ENCODE measurements at regions of chr1 and their contacts with region 1.

Region 1: GRCh38 chr1:166032572-166033371 is 134.0 kb downstream of the FAM78B start:
- DNase-seq: no peak
- ATAC-seq: no peak
- H3K4me3 ChIP-seq: no peak overlapping the region
- H3K27ac ChIP-seq: no peak overlapping the region
- H3K4me1 ChIP-seq: no peaks in the 10 kb centered on the region
- H3K27me3 ChIP-seq: no peaks in the 10 kb centered on the region
- CTCF ChIP-seq: no peak
- EP300 ChIP-seq: no peak
- POLR2A ChIP-seq: no peak
- RAD21 ChIP-seq: no peak

Region 2: DNA sequence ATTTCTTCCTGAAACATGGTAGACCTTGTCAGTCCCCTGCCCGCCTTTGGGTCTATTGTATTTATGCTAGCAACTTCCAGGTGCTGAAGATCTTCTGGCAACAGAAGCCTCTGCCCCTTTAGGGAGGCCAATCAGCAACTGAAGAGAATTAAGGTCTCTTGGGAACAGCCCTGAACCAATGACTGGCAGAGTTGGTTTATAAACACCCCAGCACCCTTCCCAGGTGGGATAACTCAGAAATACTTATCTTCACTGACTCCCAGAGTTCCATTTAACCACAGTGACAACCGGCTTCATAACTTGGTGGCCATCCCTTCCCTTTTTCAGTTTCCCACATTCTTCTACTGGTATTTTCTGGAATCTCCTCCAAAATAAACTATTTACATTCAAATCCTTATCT is 236.9 kb before region 1 on chr1:
- CTCF ChIA-PET with region 1: no interaction called
- POLR2A ChIA-PET with region 1: no interaction called
- RAD21 ChIA-PET with region 1: no interaction called
- SMC1A ChIA-PET with region 1: no interaction called
- in situ Hi-C with region 1: no loop called
- intact Hi-C with region 1: loop called (anchors 5 kb)
- DNase-seq: no peak
- ATAC-seq: no peak
- H3K4me3 ChIP-seq: no peak overlapping the region
- H3K27ac ChIP-seq: no peak overlapping the region
- H3K4me1 ChIP-seq: no peaks in the 10 kb centered on the region
- H3K27me3 ChIP-seq: no peaks in the 10 kb centered on the region; a peak in 1 of 4 replicates
- CTCF ChIP-seq: no peak
- EP300 ChIP-seq: no peak
- POLR2A ChIP-seq: no peak
- RAD21 ChIP-seq: no peak